Transverse colon (tissue), 4 donors: ENCODE measurements at regions of chr13 and their contacts with region 1.

Region 1: DNA sequence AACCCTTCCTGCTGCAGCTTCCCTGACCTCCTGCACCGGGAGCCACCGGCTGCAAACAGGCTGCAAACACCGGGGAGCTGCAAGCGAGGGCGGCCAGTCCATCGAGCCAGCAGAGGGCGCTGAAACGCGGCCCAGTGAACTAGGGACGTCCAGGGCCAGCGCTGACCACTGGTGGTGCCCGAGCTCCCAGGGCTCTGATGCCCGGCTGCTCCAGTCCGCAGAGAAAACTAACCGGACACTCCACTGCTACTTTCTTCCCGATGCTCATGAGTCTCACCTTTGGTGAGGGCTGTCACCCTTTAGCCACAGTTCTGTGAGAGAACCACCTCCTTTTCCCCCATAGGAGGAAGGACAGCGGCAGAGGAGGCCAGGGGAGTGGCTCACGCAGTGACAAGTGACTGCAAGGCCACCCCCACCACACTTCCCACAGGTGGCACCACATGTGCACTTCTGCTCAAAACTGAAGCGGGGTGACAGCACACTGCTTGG is 82.8 kb upstream of the MTIF3 start:
- DNase-seq: peak; percentile 87
- H3K4me3 ChIP-seq: peak overlapping the region in 1 of 4 donors; percentile 21
- H3K27ac ChIP-seq: no peak overlapping the region
- H3K4me1 ChIP-seq: peaks cover 0 to 9% (median 3%) of the 10 kb centered on the region in 4 donors
- H3K27me3 ChIP-seq: no peaks in the 10 kb centered on the region
- CTCF ChIP-seq: peak; percentile 83 to 91 (median 90)
- EP300 ChIP-seq: no peak
- POLR2A ChIP-seq: no peak

Region 2: GRCh38 chr13:27374650-27375049 is 158.5 kb before region 1 on chr13:
- in situ Hi-C with region 1: loop called in 2 of 4 experiments (anchors 10 to 25 kb)
- intact Hi-C with region 1: loop called (anchors 10 kb)
- DNase-seq: peak; percentile 77
- H3K4me3 ChIP-seq: no peak overlapping the region
- H3K27ac ChIP-seq: peak overlapping the region; percentile 28 to 56 (median 44)
- H3K4me1 ChIP-seq: peaks cover 0 to 24% (median 0%) of the 10 kb centered on the region in 4 donors
- H3K27me3 ChIP-seq: no peaks in the 10 kb centered on the region
- CTCF ChIP-seq: peak; percentile 61 to 83 (median 68)
- EP300 ChIP-seq: no peak
- POLR2A ChIP-seq: no peak

Region 3: DNA sequence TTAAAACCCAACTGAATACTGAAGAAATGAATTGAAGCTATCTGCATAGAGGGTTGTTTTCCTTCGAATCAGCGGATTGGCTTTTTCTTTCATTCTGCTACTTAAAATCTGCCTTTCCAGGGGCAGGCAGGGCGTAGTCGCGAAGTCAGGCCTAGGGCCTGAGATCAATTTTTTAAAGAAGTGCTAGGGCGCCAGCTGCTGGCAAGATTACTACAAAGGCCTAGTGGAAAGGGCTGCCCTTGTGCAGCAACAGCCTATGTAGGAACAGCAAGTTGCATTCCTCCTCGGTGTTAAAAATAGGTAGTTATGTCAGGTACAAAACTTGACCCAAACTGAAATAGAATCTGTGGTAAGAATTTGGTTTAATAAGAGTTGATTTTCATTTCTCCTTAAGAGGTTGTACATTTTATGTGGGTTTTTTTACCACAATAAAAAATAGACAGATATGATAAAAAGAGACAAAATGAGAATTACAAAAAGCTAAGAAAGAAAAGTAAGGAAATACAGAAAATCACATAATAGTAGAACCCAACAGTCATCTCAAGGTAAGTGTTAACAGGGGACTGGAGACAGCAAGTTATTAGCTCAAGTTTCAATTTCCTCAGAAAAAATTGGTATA is 464.8 kb after region 1 on chr13:
- in situ Hi-C with region 1: loop called in 2 of 4 experiments (anchors 25 kb)
- intact Hi-C with region 1: no loop called
- DNase-seq: peak; percentile 65
- H3K4me3 ChIP-seq: no peak overlapping the region
- H3K27ac ChIP-seq: no peak overlapping the region
- H3K4me1 ChIP-seq: no peaks in the 10 kb centered on the region
- H3K27me3 ChIP-seq: no peaks in the 10 kb centered on the region
- CTCF ChIP-seq: peak; percentile 18 to 46 (median 39)
- EP300 ChIP-seq: no peak
- POLR2A ChIP-seq: no peak

Region 4: DNA sequence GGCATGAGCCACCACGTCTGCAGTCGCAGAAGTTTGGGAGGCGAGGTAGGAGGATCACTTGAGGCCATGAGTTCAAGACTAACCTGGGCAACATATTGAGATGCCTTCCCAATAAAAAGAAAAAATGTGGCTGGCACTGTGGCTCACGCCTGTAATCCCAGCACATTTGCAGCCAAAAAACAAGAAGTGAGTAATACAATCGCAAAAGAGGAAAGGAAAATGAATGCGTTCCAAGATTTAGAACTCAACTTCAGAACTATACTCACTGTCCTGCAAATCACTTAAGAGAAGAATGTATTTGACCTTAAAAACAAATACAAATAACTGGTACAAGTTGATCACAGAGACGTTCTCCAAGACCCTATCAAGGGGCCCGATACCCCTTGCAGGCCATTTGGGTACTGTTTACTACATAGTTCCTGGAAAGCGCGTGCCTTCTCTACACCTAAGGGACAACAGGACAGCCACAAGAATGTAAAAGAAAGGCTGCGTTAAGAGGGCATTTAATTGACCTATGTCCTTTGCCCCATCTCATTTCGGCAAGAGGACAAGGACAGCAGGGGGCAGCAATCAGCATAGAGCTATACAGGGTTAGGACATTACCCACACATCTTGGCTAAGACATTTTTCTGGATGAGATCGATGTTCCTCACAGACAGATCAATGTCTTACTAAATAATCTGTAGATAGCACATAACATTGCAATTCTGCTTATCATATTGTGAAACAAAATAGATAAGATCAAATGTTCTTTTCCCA is 525.8 kb after region 1 on chr13:
- in situ Hi-C with region 1: no loop called
- intact Hi-C with region 1: no loop called
- DNase-seq: peak; percentile 51
- H3K4me3 ChIP-seq: no peak overlapping the region
- H3K27ac ChIP-seq: no peak overlapping the region
- H3K4me1 ChIP-seq: no peaks in the 10 kb centered on the region
- H3K27me3 ChIP-seq: peaks cover 13% of the 10 kb centered on the region
- CTCF ChIP-seq: peak; percentile 14 to 45 (median 31)
- EP300 ChIP-seq: no peak
- POLR2A ChIP-seq: no peak